ENCODE measurements at regions of chr11 and their contacts with region 1.

Region 1: GRCh38 chr11:86818466-86819192 is 18.3 kb downstream of the PRSS23 start:
- DNase-seq: no peak
- H3K4me3 Mint-ChIP-seq: no peak overlapping the region
- H3K27ac Mint-ChIP-seq: no peak overlapping the region
- H3K4me1 Mint-ChIP-seq: peaks cover 31% of the 10 kb centered on the region
- H3K27me3 Mint-ChIP-seq: peaks cover 24% of the 10 kb centered on the region

Region 2: DNA sequence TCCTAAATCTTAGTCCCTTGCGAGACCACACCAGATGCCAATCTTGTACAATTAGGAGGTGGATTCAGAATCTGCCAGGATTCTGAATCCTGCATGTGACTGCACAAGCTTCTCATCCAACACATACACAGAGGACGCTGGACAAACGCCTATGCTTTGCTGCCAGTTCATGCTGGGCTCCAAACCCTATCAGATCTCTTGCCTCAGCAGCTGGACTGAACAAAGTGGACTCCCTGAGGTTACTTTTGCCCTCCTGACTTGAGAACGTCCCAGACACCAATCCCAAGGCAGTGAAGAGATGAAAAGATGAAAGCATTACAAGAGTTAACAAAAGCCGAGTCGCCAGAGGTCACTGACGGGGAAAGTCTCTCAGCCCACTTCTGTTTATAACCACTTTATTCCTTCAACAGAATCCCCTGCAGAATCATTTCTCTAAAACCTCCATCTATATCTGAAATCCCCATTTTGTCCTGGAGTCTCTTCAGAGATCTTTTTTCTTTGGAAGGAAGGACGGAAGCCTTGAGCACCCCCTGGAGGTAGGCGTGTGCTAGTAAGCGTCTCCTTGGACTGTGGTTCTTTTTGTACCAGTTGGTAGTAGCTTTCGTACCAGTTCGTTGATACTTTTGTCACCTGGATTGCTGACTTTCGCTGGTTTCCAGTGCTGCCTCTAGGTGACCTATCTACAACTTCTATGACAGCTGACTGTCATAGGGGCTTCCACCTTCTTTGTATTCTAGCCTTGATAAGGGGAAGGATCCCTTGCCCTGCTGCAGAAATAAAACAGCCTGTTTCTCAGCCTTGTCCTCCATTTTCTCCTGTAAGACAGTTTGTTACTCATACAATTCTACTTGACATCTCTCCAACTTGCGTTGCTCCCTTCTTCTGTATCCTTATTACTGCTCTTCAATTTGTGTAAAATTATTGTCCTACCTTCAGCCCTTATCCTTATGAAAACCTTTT is 600.2 kb before region 1 on chr11:
- intact Hi-C with region 1: no loop called
- DNase-seq: peak; percentile 42
- H3K4me3 Mint-ChIP-seq: peak overlapping the region; percentile 40
- H3K27ac Mint-ChIP-seq: peak overlapping the region; percentile 81
- H3K4me1 Mint-ChIP-seq: peaks cover 81% of the 10 kb centered on the region
- H3K27me3 Mint-ChIP-seq: no peaks in the 10 kb centered on the region

Region 3: GRCh38 chr11:86302100-86302793 is 516.4 kb before region 1 on chr11 and contains the start of gene HIKESHI:
- intact Hi-C with region 1: loop called (anchors 1 kb)
- DNase-seq: peak; percentile 83
- H3K4me3 Mint-ChIP-seq: peak within 1 kb of the TSS; percentile 100
- H3K27ac Mint-ChIP-seq: peak within 1 kb of the TSS; percentile 97
- H3K4me1 Mint-ChIP-seq: peaks cover 28% of the 10 kb centered on the region
- H3K27me3 Mint-ChIP-seq: no peaks in the 10 kb centered on the region
- total RNA-seq, gene HIKESHI: 54.2 and 56.4 TPM in 2 replicates

Region 4: DNA sequence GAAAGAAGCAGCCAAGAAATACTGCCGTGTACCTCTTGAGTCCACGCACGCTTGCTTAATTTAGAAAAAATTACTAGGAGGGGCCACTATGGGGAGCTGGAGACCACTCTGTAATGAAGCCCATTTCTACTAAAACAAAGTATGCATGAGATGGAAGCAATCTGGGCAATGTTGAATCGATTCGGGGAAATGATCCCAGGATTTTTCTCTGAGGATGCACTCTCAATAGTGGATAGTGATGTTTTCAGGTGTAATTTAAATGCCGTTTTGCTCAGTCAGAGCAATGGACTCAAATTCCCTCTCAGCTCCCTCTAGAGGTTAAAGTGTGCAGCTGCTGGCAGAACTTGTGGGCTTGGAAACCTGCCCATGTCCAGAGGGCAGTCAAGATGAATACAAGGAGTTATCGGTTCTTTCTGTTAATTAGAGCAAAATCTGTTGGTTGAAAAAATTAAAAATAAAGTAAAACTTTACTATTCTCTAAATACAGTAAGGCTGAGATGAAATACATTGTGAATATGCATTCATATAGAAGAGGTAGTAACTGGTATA is 210.3 kb before region 1 on chr11:
- intact Hi-C with region 1: loop called (anchors 1 kb)
- DNase-seq: peak; percentile 22
- H3K4me3 Mint-ChIP-seq: no peak overlapping the region
- H3K27ac Mint-ChIP-seq: no peak overlapping the region
- H3K4me1 Mint-ChIP-seq: peaks cover 30% of the 10 kb centered on the region
- H3K27me3 Mint-ChIP-seq: peaks cover 3% of the 10 kb centered on the region

Region 5: DNA sequence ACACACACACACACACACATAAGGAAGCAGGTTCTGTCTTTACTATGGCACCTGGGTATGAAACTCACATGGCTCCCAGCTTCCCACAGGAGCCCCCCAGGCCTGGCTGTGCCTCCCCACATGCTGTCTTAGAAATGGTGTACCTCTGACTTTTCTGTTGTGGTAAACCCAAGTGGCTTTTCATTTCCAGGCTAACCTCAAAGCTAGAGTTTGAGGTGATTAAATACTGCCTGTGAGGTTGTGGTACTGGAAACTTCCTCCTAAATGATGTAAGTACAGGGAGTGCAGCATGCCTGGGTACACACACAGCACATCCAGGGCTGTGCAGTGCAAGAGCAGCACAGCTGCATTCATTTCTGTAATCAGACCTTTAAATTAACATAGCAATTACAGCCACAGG is 180.6 kb before region 1 on chr11:
- intact Hi-C with region 1: loop called (anchors 2 kb)
- DNase-seq: peak; percentile 40
- H3K4me3 Mint-ChIP-seq: no peak overlapping the region
- H3K27ac Mint-ChIP-seq: peak overlapping the region; percentile 33
- H3K4me1 Mint-ChIP-seq: peaks cover 51% of the 10 kb centered on the region
- H3K27me3 Mint-ChIP-seq: peaks cover 20% of the 10 kb centered on the region